AG04449 (cell line): ENCODE measurements at regions of chr18 and their contacts with region 1.

Region 1: DNA sequence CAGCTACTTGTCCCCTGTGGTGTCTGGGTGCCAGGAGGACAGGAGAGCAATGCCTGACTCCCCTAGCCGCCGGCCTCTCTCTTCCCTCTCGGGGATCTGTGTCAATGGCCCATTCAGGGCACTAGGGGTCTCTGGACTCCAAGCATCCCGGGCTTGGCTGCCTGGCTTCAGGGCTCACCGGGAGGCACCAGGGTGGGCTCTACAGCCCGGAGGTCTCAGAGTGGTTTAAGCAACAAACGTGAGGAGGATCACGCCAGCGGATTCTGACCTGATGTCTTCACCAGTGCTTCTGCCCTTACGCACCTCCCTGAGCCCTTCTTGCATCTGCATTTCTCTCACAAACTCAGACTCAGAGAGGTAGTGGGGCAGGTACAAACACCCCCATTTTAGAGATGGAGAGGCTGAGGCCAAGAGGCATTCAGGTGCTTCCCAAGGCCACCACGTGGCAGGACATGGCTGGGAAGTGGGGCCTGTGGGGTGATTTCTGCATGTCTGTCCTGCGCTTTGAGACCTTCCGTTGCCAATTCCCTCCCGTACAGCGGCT is 243.0 kb downstream of the CELF4 start:
- DNase-seq: no peak
- H3K4me3 ChIP-seq: no peak overlapping the region
- CTCF ChIP-seq: peak; percentile 84

Region 2: GRCh38 chr18:37309055-37309454 is 13.5 kb before region 1 on chr18:
- CTCF ChIA-PET with region 1: interaction called, 47 read pairs
- POLR2A ChIA-PET with region 1: no interaction called
- DNase-seq: no peak
- H3K4me3 ChIP-seq: no peak overlapping the region
- CTCF ChIP-seq: no peak

Region 3: GRCh38 chr18:37335409-37335736 is 12.8 kb after region 1 on chr18:
- CTCF ChIA-PET with region 1: interaction called, 32 read pairs
- POLR2A ChIA-PET with region 1: no interaction called
- DNase-seq: no peak
- H3K4me3 ChIP-seq: no peak overlapping the region
- CTCF ChIP-seq: peak; percentile 46

Region 4: GRCh38 chr18:37516361-37516853 is 193.8 kb after region 1 on chr18:
- CTCF ChIA-PET with region 1: no interaction called
- POLR2A ChIA-PET with region 1: no interaction called
- DNase-seq: no peak
- H3K4me3 ChIP-seq: no peak overlapping the region
- CTCF ChIP-seq: no peak

Region 5: DNA sequence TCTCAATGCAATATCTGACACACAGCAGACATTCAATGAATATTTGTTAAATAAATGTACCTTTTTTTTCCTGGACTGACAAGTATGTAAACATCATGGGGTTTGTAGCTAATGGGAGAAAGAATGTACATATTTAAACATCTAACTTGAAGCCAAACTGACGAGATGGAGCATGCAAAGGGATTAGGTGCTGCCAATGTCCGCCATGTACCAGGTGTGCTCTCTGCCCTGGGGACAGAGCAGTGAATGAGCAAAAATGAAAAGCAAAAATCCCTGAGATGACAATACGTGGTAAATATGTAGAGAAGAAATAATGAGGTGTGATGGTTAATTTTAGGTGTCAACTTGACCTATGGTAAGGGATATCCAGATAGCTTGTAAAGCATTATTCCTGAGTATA is 490.4 kb after region 1 on chr18:
- CTCF ChIA-PET with region 1: no interaction called
- POLR2A ChIA-PET with region 1: no interaction called
- DNase-seq: no peak
- H3K4me3 ChIP-seq: no peak overlapping the region
- CTCF ChIP-seq: no peak